IMR-90 (cell line): ENCODE measurements at regions of chr4 and their contacts with region 1.

Region 1: DNA sequence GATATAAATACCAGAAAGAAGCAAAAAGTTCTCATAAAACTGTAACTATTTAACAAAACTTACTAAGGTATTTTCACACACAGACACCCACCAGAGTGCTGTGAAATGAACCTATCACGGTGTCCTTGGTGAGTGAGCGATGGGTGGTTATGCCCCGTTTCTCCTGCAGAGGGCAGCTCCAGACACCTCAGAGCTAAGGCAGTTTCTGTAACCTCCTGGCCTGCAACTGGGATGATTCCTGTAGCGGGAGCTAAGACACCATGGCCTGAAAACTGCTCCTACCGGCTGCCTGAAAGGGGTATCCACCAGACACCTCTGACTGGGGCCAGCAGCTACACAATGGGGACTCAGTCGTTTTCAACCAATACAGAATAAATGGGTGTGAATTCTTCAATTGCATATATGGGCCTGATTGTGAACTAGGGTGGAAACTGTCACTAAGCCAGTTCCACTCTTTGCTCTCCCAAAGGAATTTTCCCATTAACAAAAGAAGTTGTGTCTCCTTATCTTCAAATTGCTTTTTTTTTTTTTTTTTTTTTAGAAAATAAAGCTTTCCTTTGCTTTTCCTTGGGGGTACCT is 2375.8 kb upstream of the TENM3 start:
- DNase-seq: peak; percentile 57
- ATAC-seq: peak; percentile 84
- H3K4me3 ChIP-seq: no peak overlapping the region
- H3K27ac ChIP-seq: no peak overlapping the region
- H3K4me1 ChIP-seq: no peaks in the 10 kb centered on the region
- H3K27me3 ChIP-seq: no peaks in the 10 kb centered on the region
- CTCF ChIP-seq: peak; percentile 54
- POLR2A ChIP-seq: no peak
- RAD21 ChIP-seq: peak; percentile 59

Region 2: GRCh38 chr4:180028682-180029081 is 161.3 kb after region 1 on chr4:
- CTCF ChIA-PET with region 1: no interaction called
- POLR2A ChIA-PET with region 1: no interaction called
- dilution Hi-C with region 1: no loop called
- in situ Hi-C with region 1: no loop called
- intact Hi-C with region 1: loop called (anchors 1 kb)
- DNase-seq: peak; percentile 55
- ATAC-seq: no peak
- H3K4me3 ChIP-seq: no peak overlapping the region
- H3K27ac ChIP-seq: no peak overlapping the region
- H3K4me1 ChIP-seq: no peaks in the 10 kb centered on the region
- H3K27me3 ChIP-seq: no peaks in the 10 kb centered on the region
- CTCF ChIP-seq: peak; percentile 40
- POLR2A ChIP-seq: no peak
- RAD21 ChIP-seq: peak; percentile 34

Region 3: GRCh38 chr4:180688480-180688879 is 821.1 kb after region 1 on chr4:
- CTCF ChIA-PET with region 1: no interaction called
- POLR2A ChIA-PET with region 1: no interaction called
- dilution Hi-C with region 1: no loop called
- in situ Hi-C with region 1: no loop called
- intact Hi-C with region 1: no loop called
- DNase-seq: no peak
- ATAC-seq: no peak
- H3K4me3 ChIP-seq: no peak overlapping the region
- H3K27ac ChIP-seq: no peak overlapping the region
- H3K4me1 ChIP-seq: no peaks in the 10 kb centered on the region
- H3K27me3 ChIP-seq: no peaks in the 10 kb centered on the region
- CTCF ChIP-seq: no peak
- POLR2A ChIP-seq: no peak
- RAD21 ChIP-seq: no peak